Activated T-helper 1 cell treated with anti-CD3 and anti-CD28 coated beads, Interleukin-12 subunit alpha, Interleukin-12 subunit beta, Interleukin-2, Interleukin-4 antibody, amounts not matched to agents 30 ng/mL and 10 ng/mL and 1 ng/mL, durations not matched to agents 14 hours and 24 hours and 36 hours (primary cell): ENCODE measurements at regions of chr1 and their contacts with region 1.

Region 1: GRCh38 chr1:24744911-24745710 is at the start of gene CLIC4:
- DNase-seq: peak; percentile 100
- H3K4me3 Mint-ChIP-seq: peak within 1 kb of the TSS; percentile 93
- H3K27ac Mint-ChIP-seq: peak within 1 kb of the TSS; percentile 91
- H3K4me1 Mint-ChIP-seq: peaks cover 56% of the 10 kb centered on the region
- H3K27me3 Mint-ChIP-seq: peaks cover 2% of the 10 kb centered on the region
- total RNA-seq, gene CLIC4: 16.8 and 20.6 TPM in 2 replicates

Region 2: GRCh38 chr1:23825076-23825761 is 919.9 kb before region 1 on chr1 and contains the start of gene HMGCL:
- intact Hi-C with region 1: no loop called
- DNase-seq: peak; percentile 81
- H3K4me3 Mint-ChIP-seq: peak within 1 kb of the TSS; percentile 94
- H3K27ac Mint-ChIP-seq: peak within 1 kb of the TSS; percentile 89
- H3K4me1 Mint-ChIP-seq: peaks cover 15% of the 10 kb centered on the region
- H3K27me3 Mint-ChIP-seq: no peaks in the 10 kb centered on the region
- total RNA-seq, gene HMGCL: 18.5 and 19.9 TPM in 2 replicates

Region 3: DNA sequence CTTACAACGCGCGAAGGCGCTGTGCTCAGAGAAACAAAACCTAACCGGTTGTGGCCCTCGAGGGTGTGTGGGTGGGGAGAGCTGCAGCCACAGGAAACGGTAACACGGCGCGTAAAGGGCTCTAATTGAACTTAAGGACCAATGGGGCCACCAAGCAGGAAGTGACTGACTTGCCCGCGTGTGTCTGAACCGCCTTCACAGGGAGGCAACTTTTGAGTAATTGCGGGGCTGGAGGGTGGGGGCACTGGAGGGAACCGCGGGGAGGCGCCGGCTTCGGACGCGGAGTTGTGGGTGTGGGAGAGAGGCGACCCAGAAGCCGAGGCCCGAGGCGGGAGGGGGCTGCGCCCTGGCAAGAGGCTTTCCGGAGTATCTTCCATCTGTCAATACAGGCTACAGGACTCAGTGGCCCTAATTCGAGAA is 786.1 kb before region 1 on chr1:
- intact Hi-C with region 1: loop called (anchors 5 kb)
- DNase-seq: peak; percentile 90
- H3K4me3 Mint-ChIP-seq: peak overlapping the region; percentile 99
- H3K27ac Mint-ChIP-seq: peak overlapping the region; percentile 100
- H3K4me1 Mint-ChIP-seq: peaks cover 67% of the 10 kb centered on the region
- H3K27me3 Mint-ChIP-seq: no peaks in the 10 kb centered on the region

Region 4: DNA sequence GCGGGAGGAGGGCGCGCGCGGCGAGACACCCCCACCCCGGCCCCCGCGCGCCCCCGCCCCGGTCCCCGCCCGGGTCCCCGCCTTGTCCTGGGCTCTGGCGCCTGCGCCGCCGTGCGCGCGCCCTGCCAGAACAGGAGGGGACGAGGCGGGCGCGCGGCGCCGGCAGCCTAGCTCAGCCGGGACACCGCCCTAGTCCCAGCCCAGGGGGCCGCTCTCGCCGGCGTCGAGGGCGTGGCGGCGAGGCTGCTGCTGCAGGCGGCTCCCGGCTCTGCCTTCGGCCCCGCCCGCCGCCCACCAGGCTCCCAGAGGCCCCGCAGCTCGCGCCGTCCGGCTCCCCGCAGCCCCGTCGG is 242.4 kb before region 1 on chr1 and contains the start of gene RCAN3:
- intact Hi-C with region 1: loop called (anchors 5 kb)
- DNase-seq: peak; percentile 91
- H3K4me3 Mint-ChIP-seq: peak within 1 kb of the TSS; percentile 97
- H3K27ac Mint-ChIP-seq: peak within 1 kb of the TSS; percentile 94
- H3K4me1 Mint-ChIP-seq: peaks cover 64% of the 10 kb centered on the region
- H3K27me3 Mint-ChIP-seq: no peaks in the 10 kb centered on the region
- total RNA-seq, gene RCAN3: 26.5 and 26.8 TPM in 2 replicates

Region 5: DNA sequence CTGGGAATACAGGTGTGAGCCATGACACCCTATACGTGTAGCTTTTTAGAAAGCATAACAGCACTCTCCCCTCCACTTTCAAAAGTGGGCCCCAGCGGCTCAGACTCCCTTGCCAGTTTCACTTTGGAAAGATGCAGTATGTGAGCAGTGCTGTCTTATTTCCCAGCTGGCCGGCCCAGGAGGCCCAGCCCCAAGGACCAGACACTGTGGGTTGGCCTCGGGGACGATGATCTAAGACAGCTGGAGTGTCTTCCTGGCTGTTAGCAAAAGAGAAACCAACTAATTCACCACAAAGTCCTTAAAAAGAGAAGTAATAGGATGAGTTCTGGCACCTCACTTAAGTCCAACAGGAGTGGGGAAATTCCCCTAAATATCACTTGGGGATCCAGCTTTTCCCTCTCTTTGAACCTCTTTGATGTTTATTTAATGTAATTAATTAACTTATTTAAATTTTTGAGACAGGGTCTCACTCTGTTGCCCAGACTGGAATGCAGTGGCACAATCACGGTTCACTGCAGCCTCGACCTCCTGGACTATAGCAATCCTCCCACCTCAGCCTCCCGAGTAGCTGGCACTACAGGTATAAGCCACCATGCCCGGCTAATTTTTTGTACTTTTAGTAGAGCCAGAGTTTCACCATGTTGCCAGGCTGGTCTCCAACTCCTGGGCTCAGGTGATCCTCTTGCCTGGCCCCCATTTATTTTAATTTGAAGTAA is 17.5 kb before region 1 on chr1:
- intact Hi-C with region 1: loop called (anchors 2 kb)
- DNase-seq: no peak
- H3K4me3 Mint-ChIP-seq: no peak overlapping the region
- H3K27ac Mint-ChIP-seq: no peak overlapping the region
- H3K4me1 Mint-ChIP-seq: peaks cover 10% of the 10 kb centered on the region
- H3K27me3 Mint-ChIP-seq: peaks cover 2% of the 10 kb centered on the region

Region 6: GRCh38 chr1:24923485-24924113 is 178.5 kb after region 1 on chr1:
- intact Hi-C with region 1: loop called (anchors 2 kb)
- DNase-seq: no peak
- H3K4me3 Mint-ChIP-seq: peak overlapping the region; percentile 45
- H3K27ac Mint-ChIP-seq: peak overlapping the region; percentile 71
- H3K4me1 Mint-ChIP-seq: peaks cover 78% of the 10 kb centered on the region
- H3K27me3 Mint-ChIP-seq: peaks cover 2% of the 10 kb centered on the region

Region 7: GRCh38 chr1:25232027-25232865 is 487.1 kb after region 1 on chr1 and contains the start of gene SYF2:
- intact Hi-C with region 1: loop called (anchors 1 kb)
- DNase-seq: peak; percentile 83
- H3K4me3 Mint-ChIP-seq: no peak within 1 kb of the TSS
- H3K27ac Mint-ChIP-seq: no peak within 1 kb of the TSS
- H3K4me1 Mint-ChIP-seq: peaks cover 32% of the 10 kb centered on the region
- H3K27me3 Mint-ChIP-seq: no peaks in the 10 kb centered on the region
- total RNA-seq, gene SYF2: 40.7 and 41.4 TPM in 2 replicates